RWPE1 (cell line): ENCODE measurements at regions of chr13 and their contacts with region 1.

Region 1: DNA sequence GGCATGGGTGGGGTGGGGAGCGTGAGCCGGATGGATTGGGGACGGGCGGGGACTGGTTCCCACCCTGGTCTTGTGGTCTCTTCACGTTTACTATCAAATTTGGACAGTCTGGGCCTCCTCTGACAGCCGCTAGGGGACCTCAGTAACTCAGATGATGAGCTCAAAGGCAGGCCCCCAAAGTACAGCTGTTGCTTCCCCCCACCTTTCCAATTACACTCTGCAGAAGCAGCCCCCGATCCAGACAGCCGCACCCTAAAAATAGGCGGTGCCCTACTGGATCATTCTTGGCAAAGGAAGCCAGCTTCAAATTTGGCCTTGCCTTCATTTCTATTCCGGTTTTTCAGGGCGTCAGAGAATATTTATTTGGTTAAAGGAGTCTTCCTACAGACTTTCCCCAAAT is 1.9 kb upstream of the FOXO1 start:
- DNase-seq: peak; percentile 20
- H3K27ac ChIP-seq: peak overlapping the region; percentile 58
- CTCF ChIP-seq: peak; percentile 64

Region 2: GRCh38 chr13:40652588-40652940 is 15.8 kb before region 1 on chr13:
- CTCF ChIA-PET with region 1: interaction called, 10 read pairs
- POLR2A ChIA-PET with region 1: no interaction called
- DNase-seq: no peak
- H3K27ac ChIP-seq: no peak overlapping the region
- CTCF ChIP-seq: no peak